Heart right ventricle (tissue), 16 donors: ENCODE measurements at regions of chr19 and their contacts with region 1.

Region 1: DNA sequence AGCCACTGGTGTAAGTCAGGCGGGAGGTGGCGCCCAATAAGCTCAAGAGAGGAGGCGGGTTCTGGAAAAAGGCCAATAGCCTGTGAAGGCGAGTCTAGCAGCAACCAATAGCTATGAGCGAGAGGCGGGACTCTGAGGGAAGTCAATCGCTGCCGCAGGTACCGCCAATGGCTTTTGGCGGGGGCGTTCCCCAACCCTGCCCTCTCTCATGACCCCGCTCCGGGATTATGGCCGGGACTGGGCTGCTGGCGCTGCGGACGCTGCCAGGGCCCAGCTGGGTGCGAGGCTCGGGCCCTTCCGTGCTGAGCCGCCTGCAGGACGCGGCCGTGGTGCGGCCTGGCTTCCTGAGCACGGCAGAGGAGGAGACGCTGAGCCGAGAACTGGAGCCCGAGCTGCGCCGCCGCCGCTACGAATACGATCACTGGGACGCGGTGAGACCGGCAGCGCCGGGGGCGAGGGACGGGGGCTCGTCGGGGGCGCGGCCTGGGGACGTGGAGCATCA is at the start of gene ALKBH7:
- DNase-seq: peak; percentile 95 to 100
- ATAC-seq: peak; percentile 86 to 94 (median 91)
- H3K4me3 ChIP-seq: peak within 1 kb of the TSS; percentile 54 to 100 (median 66)
- H3K27ac ChIP-seq: peak within 1 kb of the TSS; percentile 91 to 100 (median 96)
- H3K4me1 ChIP-seq: peaks cover 0 to 26% (median 8%) of the 10 kb centered on the region in 9 donors
- H3K27me3 ChIP-seq: no peaks in the 10 kb centered on the region
- CTCF ChIP-seq: peak in 1 of 9 donors; percentile 1
- total RNA-seq, gene ALKBH7: 134 to 221 (median 171) TPM

Region 2: GRCh38 chr19:6362027-6362350 is 10.7 kb before region 1 on chr19:
- intact Hi-C with region 1: loop called in 1 of 10 experiments (anchors 1 kb)
- DNase-seq: no peak
- ATAC-seq: peak in 4 of 8 donors; percentile 11 to 27 (median 20)
- H3K4me3 ChIP-seq: peak overlapping the region; percentile 71 to 99 (median 88)
- H3K27ac ChIP-seq: peak overlapping the region; percentile 53 to 95 (median 92)
- H3K4me1 ChIP-seq: peaks cover 0 to 14% (median 8%) of the 10 kb centered on the region in 9 donors
- H3K27me3 ChIP-seq: no peaks in the 10 kb centered on the region
- CTCF ChIP-seq: no peak

Region 3: DNA sequence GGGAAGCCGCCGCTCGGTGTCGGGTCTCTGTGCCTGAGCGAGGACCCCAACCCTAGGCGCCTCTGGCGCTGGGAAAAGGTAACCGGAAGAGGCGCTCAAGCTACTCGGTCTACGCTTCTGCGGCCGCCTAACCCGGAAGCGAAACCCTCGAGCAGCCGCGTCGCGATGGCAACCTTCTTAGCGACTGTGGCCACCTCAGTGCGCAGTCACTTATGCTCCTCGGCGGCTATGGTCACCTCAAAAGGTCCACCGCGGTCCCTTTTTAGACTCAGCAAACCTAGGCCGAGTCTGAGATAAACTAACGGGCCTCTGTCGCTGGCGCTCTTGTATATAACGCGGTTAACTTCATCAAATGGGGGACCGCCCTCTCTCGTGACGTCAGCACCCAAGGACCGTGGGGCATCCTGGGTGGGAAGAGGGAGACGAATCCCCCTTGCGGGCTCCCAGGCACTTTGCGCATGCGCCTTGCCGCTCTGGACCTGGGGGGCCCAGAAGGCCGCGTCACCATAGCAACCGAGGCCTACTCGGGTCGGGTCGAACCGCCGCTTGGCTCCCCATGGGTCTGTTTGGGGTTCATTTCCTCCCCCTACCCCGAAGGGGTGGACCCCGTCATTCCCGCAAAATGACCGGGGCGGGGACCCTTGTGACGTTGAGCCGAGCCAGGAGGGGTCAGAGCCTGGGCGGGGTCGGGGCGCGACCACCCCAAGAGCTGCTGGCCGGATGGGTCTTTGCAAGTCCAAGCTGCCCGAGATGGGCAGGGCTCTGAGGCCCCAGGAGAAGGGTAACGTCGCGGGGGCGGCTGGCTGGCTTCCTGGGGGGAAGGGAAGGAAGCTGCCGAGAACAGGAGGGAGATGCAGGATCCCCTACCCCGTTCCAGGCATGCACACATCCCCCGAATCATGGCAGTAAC is 20.7 kb after region 1 on chr19 and contains the start of gene GTF2F1:
- intact Hi-C with region 1: loop called in 1 of 10 experiments (anchors 2 kb)
- DNase-seq: peak; percentile 96
- ATAC-seq: peak; percentile 93 to 97 (median 95)
- H3K4me3 ChIP-seq: peak within 1 kb of the TSS; percentile 51 to 97 (median 79)
- H3K27ac ChIP-seq: peak within 1 kb of the TSS; percentile 82 to 98 (median 96)
- H3K4me1 ChIP-seq: peaks cover 0 to 19% (median 12%) of the 10 kb centered on the region in 9 donors
- H3K27me3 ChIP-seq: no peaks in the 10 kb centered on the region
- CTCF ChIP-seq: peak in 5 of 9 donors; percentile 1 to 45 (median 30)
- total RNA-seq, gene GTF2F1: 26.4 to 36.4 (median 30.8) TPM

Region 4: GRCh38 chr19:6424939-6425731 is 52.5 kb after region 1 on chr19:
- intact Hi-C with region 1: loop called in 3 of 10 experiments (anchors 2 to 10 kb)
- DNase-seq: peak; percentile 99 to 100
- ATAC-seq: peak; percentile 92 to 96 (median 96)
- H3K4me3 ChIP-seq: peak overlapping the region in 9 of 10 donors; percentile 1 to 90 (median 39)
- H3K27ac ChIP-seq: peak overlapping the region; percentile 32 to 94 (median 80)
- H3K4me1 ChIP-seq: peaks cover 10 to 40% (median 29%) of the 10 kb centered on the region in 9 donors
- H3K27me3 ChIP-seq: no peaks in the 10 kb centered on the region
- CTCF ChIP-seq: peak in 1 of 9 donors; percentile 10

Region 5: DNA sequence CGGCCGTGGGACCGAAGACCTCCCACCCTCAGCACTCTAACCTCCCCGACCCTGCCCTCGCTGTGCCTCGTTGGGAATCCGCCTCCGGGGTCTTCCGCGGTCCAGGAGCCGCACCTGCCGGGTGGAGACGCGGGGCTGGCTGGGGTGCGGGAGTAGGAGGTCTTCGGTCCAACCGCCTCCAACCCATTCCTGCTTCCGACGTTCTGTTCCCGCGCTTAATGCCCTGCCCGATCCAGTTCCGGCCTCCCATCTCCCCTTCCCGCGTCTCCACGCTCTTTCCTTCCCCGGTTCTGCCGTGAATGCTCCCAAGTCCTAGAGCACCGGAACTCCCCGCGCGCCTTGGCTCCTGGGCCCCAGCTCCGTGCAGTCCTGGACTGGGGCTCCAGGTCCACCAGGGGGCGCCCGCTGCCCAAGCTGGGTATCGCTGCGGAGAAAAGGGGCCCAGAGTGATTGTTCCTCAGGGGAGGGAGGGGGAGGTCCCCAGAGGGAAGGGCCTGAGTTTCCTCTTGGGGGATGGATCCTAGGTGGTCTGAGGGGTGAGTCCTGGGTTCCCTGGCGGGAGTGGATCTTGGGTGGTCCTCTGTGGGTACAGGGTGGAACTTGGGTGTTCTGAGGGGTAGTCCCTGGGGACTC is 144.1 kb after region 1 on chr19:
- intact Hi-C with region 1: no loop called
- DNase-seq: peak; percentile 87 to 94
- ATAC-seq: peak; percentile 90 to 98 (median 94)
- H3K4me3 ChIP-seq: peak overlapping the region; percentile 48 to 73 (median 62)
- H3K27ac ChIP-seq: peak overlapping the region in 9 of 10 donors; percentile 33 to 77 (median 54)
- H3K4me1 ChIP-seq: peaks cover 0 to 31% (median 12%) of the 10 kb centered on the region in 9 donors
- H3K27me3 ChIP-seq: peaks cover 0 to 13% (median 9%) of the 10 kb centered on the region in 7 donors
- CTCF ChIP-seq: peak in 8 of 9 donors; percentile 87 to 98 (median 96)